Lower lobe of right lung (tissue), 2 donors: ENCODE measurements at regions of chr1 and their contacts with region 1.

Region 1: GRCh38 chr1:9289090-9289534 is 3.6 kb upstream of the SPSB1 start:
- DNase-seq: peak; percentile 77
- ATAC-seq: peak in 1 of 2 donors; percentile 20
- H3K4me3 ChIP-seq: no peak overlapping the region
- H3K27ac ChIP-seq: no peak overlapping the region
- H3K4me1 ChIP-seq: peaks cover 29% of the 10 kb centered on the region
- H3K27me3 ChIP-seq: no peaks in the 10 kb centered on the region
- CTCF ChIP-seq: peak; percentile 95

Region 2: GRCh38 chr1:9455487-9456234 is 166.5 kb after region 1 on chr1:
- intact Hi-C with region 1: loop called (anchors 10 kb)
- DNase-seq: peak; percentile 73
- ATAC-seq: peak; percentile 78 to 89
- H3K4me3 ChIP-seq: no peak overlapping the region
- H3K27ac ChIP-seq: no peak overlapping the region
- H3K4me1 ChIP-seq: no peaks in the 10 kb centered on the region
- H3K27me3 ChIP-seq: no peaks in the 10 kb centered on the region
- CTCF ChIP-seq: peak; percentile 82

Region 3: GRCh38 chr1:9494929-9495758 is 206.0 kb after region 1 on chr1:
- intact Hi-C with region 1: loop called (anchors 5 kb)
- DNase-seq: peak; percentile 74
- ATAC-seq: peak; percentile 79 to 88
- H3K4me3 ChIP-seq: peak overlapping the region; percentile 30
- H3K27ac ChIP-seq: no peak overlapping the region
- H3K4me1 ChIP-seq: peaks cover 13% of the 10 kb centered on the region
- H3K27me3 ChIP-seq: no peaks in the 10 kb centered on the region
- CTCF ChIP-seq: peak; percentile 99